ENCODE measurements at regions of chr11 and their contacts with region 1.

Region 1: GRCh38 chr11:110296226-110297075 is at the start of gene RDX:
- DNase-seq: peak; percentile 67
- ATAC-seq: peak; percentile 81
- H3K4me3 ChIP-seq: peak within 1 kb of the TSS; percentile 69 to 93
- H3K27ac ChIP-seq: peak within 1 kb of the TSS; percentile 99
- H3K4me1 ChIP-seq: peaks cover 43 to 57% of the 10 kb centered on the region in 2 experiments
- H3K27me3 ChIP-seq: no peaks in the 10 kb centered on the region
- CTCF ChIP-seq: no peak
- POLR2A ChIP-seq: peak; percentile 51
- RAD21 ChIP-seq: no peak
- total RNA-seq, gene RDX: 131 TPM

Region 2: DNA sequence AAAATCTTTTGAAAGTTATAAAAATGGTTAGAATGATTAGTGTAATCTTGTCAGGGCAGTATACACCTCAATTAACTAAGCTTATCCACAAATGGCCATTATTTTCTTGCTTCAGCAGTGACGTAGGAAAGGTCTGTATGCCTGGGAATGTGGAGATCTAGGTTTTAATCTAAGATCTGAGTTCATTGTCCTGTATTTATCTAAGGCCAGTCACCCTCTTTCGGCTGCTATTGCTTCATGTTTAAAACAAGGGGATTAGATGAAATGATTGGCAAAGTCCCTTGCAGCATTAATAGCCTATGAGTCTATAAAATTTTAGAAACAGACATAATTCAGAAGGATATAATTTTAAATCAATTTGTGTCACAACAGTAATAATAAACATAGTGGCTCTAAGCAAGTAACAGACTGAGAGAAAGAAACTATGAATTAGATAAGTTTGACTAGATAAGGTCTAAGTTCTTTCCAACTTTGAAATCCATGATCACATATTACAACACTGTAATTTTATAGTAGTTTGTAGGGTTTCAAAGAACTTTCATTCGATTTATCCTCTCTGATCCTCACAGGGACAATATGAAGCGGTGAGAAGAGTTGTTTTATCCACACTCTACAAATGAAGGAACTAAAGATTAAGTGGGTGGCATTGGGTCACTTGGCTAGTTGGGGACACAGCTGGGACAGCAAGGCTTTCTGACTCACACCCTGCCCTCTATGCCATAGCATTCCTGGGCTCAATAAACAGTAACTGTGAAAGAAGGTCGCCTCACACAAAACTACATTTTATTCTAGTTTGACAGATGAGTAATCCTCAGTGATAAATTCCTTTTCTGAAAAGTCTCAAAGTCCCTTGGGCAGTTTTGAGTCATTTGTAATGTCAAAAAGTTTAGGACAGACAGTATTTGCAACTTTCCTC is 60.6 kb after region 1 on chr11:
- CTCF ChIA-PET with region 1: no interaction called
- POLR2A ChIA-PET with region 1: no interaction called
- RAD21 ChIA-PET with region 1: no interaction called
- intact Hi-C with region 1: loop called (anchors 5 kb)
- DNase-seq: peak; percentile 91
- ATAC-seq: peak; percentile 90
- H3K4me3 ChIP-seq: peak overlapping the region in 1 of 2 experiments; percentile 44; a peak in 1 of 4 replicates
- H3K27ac ChIP-seq: peak overlapping the region; percentile 88
- H3K4me1 ChIP-seq: peaks cover 42 to 49% of the 10 kb centered on the region in 2 experiments
- H3K27me3 ChIP-seq: no peaks in the 10 kb centered on the region
- CTCF ChIP-seq: no peak
- POLR2A ChIP-seq: no peak
- RAD21 ChIP-seq: peak; percentile 7; the same call in 1 of the 2 replicates

Region 3: GRCh38 chr11:110505528-110506284 is 209.3 kb after region 1 on chr11:
- CTCF ChIA-PET with region 1: no interaction called
- POLR2A ChIA-PET with region 1: no interaction called
- RAD21 ChIA-PET with region 1: no interaction called
- intact Hi-C with region 1: no loop called
- DNase-seq: no peak
- ATAC-seq: no peak
- H3K4me3 ChIP-seq: no peak overlapping the region
- H3K27ac ChIP-seq: no peak overlapping the region
- H3K4me1 ChIP-seq: no peaks in the 10 kb centered on the region
- H3K27me3 ChIP-seq: 0 out of 2 replicates have a peak, but pooled peaks cover under 1% of the 10 kb centered on the region
- CTCF ChIP-seq: no peak
- POLR2A ChIP-seq: no peak
- RAD21 ChIP-seq: no peak